Transverse colon (tissue), 4 donors: ENCODE measurements at regions of chr6 and their contacts with region 1.

Region 1: DNA sequence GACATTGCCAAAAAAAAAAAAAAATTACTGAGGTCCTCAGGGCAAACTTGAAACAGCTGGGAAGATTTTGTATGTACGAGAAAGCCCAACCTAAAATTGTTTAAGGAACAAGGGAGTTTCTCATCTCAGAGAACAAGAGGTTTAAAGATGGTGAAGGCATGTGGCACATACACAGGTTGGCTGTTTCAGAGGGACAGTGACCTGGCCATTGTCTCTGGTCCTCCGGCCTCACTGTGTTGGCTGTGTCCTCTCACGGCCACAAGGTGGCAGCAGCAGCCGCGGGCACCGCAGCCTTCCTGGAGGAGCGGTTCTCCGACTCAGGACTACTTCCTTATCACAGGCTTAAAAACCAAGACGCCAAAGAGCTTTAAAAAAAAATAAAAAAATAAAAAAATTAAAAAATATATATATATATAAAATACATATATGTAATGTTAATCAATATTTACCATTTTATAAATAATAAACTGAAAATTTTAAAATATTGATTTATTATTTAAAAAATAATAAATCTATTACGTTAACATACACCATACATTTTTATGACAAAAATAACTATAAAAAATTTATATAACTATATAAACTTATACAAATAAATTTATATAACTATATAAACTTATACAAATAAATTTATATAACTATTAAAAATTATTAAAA is 52.8 kb downstream of the GTF2H5 start:
- DNase-seq: peak; percentile 86
- H3K4me3 ChIP-seq: no peak overlapping the region
- H3K27ac ChIP-seq: no peak overlapping the region
- H3K4me1 ChIP-seq: no peaks in the 10 kb centered on the region
- H3K27me3 ChIP-seq: no peaks in the 10 kb centered on the region
- CTCF ChIP-seq: peak; percentile 88 to 96 (median 93)
- EP300 ChIP-seq: no peak
- POLR2A ChIP-seq: no peak

Region 2: GRCh38 chr6:158599635-158600034 is 378.7 kb after region 1 on chr6:
- in situ Hi-C with region 1: loop called (anchors 5 to 25 kb)
- intact Hi-C with region 1: loop called (anchors 10 kb)
- DNase-seq: no peak
- H3K4me3 ChIP-seq: no peak overlapping the region
- H3K27ac ChIP-seq: no peak overlapping the region
- H3K4me1 ChIP-seq: no peaks in the 10 kb centered on the region
- H3K27me3 ChIP-seq: no peaks in the 10 kb centered on the region
- CTCF ChIP-seq: no peak
- EP300 ChIP-seq: no peak
- POLR2A ChIP-seq: no peak

Region 3: DNA sequence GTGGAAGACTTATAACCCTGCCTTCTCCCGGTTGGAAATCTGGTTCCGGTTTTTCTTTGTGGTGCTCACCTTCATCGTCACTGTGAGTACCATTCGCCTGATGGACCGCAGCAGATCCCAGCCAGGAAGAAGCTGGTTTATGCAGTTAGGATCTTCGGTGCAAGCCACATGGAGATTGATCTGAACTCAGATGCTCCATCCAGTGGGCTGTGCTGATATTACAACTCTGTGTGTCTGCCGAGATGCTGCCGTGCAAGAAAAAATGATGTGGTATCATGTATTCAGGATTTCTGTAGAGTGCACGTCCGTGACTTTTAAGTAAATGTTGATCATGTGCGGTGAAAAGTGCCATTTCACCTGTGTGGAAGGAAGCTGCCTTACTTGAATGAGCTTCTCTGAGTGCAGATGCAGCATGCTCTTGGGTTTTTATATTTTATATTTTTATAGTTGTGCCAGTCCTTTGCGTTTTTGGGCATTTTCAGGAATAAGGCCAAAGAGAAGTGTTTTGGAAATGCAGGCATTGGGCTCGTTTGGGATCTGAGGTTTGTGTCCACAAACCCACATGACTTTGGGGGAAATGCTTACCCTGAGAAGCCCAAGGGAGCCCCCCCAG is 384.5 kb after region 1 on chr6:
- in situ Hi-C with region 1: loop called (anchors 5 to 25 kb)
- intact Hi-C with region 1: loop called (anchors 10 kb)
- DNase-seq: peak; percentile 73
- H3K4me3 ChIP-seq: no peak overlapping the region
- H3K27ac ChIP-seq: no peak overlapping the region
- H3K4me1 ChIP-seq: no peaks in the 10 kb centered on the region
- H3K27me3 ChIP-seq: no peaks in the 10 kb centered on the region
- CTCF ChIP-seq: peak; percentile 65 to 84 (median 74)
- EP300 ChIP-seq: no peak
- POLR2A ChIP-seq: no peak